ENCODE measurements at regions of chr7 and their contacts with region 1.

Region 1: DNA sequence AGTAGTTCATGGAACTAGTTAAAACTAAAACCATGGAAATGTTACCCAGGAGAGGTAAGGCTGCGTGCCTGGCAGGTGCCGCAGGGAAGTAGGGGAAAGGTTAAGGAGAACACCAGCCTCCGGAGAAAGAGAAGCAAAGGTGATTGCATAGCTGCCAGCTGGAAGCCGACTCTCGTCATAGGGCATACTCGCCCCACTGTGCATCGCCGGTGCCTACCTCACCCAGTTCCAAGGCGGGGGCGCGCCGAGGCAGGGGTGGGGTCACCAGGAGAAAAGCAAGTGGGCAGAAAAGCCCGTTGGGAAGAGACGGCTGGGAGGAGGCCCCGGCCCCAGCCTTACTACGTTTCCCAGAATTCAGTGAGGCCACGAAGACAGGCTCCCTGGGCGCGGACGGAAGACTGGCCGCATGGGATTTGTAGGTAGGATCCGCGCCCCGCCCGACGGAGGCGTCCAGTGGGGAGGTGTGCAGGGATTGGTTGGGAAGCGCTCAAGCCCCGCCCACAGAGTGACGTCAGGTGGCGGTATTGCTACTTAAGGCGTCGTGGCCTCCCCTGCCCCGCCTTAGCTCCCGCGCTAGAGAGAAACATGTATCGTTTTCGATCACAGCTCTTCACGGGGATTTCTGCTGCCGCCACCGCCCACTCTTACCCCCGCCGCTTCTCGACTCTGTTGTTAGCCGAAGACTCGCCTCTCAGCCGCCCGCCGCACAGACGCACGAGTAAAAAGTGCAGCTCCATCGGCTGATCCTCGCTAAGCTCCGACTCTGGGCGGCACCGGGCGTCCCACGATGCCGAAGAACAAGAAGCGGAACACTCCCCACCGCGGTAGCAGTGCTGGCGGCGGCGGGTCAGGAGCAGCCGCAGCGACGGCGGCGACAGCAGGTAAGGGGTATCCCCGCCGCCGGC is at the start of gene IFRD1:
- DNase-seq: peak; percentile 95
- ATAC-seq: peak; percentile 86
- H3K4me3 ChIP-seq: peak within 1 kb of the TSS; percentile 94 to 97
- H3K27ac ChIP-seq: peak within 1 kb of the TSS; percentile 77
- H3K4me1 ChIP-seq: peaks cover 18 to 32% of the 10 kb centered on the region in 2 experiments
- H3K27me3 ChIP-seq: no peaks in the 10 kb centered on the region
- CTCF ChIP-seq: no peak
- POLR2A ChIP-seq: peak; percentile 98
- RAD21 ChIP-seq: no peak
- total RNA-seq, gene IFRD1: 43.6 TPM

Region 2: DNA sequence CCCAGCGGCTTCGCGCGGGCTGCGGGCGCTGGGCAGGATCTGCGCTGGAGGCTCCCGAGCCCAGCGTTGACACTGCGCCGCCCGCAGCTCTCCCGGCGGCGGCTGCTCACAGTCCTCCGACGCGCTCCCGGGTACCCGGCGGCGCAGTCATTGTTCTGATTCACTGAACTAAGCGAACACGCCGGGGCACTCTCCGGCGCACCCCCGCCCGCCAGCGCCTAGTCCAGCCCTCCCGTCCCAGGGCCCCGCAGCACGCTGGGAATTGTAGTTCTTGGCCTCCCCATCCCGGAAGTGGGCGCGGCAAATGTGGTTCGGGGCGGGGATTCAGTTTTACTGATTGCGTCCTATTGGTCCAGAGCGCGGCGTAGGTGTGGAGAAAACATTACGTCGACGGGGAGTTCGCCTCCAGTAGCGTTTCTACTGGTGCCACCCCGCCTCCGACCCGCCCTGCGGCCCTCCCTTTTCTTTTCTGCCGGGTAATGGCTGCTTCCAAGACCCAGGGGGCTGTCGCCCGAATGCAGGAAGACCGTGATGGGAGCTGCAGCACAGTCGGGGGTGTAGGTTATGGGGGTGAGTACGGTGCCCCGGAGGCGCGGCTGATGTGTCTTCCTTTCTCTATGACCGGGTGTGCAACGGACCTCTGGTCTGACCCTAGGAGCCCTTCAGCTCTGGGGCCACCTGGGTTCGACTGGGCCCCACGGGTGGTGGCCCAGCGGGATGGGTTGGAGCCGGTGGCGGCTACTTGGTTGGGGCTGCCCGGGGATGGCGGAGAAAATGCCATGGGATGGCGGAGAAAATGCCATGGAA is 243.7 kb before region 1 on chr7 and contains the starts of genes DOCK4 and ZNF277:
- CTCF ChIA-PET with region 1: no interaction called
- POLR2A ChIA-PET with region 1: interaction called, 5 read pairs
- RAD21 ChIA-PET with region 1: no interaction called
- intact Hi-C with region 1: loop called (anchors 2 kb)
- DNase-seq: peak; percentile 96
- ATAC-seq: peak; percentile 89
- H3K4me3 ChIP-seq: peak within 1 kb of the TSS; percentile 73 to 76
- H3K27ac ChIP-seq: peak within 1 kb of the TSS; percentile 11; the same call in 1 of the 2 replicates
- H3K4me1 ChIP-seq: peaks cover 2 to 17% of the 10 kb centered on the region in 2 experiments; a peak in 3 of 4 replicates
- H3K27me3 ChIP-seq: peaks cover 21% of the 10 kb centered on the region
- CTCF ChIP-seq: no peak
- POLR2A ChIP-seq: no peak
- RAD21 ChIP-seq: no peak
- total RNA-seq, gene DOCK4: 2.2 TPM
- total RNA-seq, gene ZNF277: 21.3 TPM

Region 3: DNA sequence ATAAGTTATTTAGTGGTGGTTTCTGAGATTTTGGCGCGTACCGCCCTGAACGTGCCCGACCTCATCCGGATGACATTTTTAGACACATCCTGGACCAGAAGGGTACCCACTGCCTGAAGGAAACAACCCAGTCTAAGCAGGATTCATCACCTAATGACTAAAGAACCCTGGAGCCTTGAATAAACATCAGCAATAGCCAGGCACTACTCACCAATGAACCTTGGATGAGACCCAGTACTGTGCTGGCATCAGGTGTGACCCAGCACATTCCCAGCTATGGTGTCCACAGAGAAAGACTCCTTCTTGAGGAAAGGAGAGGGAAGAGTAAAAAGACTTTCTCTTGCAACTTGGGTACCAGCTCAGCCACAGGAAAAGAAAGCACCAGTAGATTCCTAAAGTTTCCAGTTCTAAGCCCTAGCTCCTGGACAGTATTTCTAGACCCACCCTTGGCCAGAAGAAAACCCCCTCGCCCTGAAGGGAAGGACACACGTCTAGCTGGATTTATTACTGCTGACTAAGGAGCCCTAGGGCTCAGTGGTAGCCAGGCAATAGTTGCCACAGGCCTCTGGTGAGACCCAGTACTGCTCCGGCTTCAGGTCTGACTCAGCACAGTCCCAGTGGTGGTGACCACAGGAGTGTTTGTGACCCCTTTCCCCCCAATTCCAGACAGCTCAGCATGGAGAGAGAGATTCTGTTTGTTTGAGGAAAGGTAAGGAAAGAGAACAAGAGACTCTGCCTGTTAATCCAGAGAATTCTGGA is 211.1 kb before region 1 on chr7:
- CTCF ChIA-PET with region 1: no interaction called
- POLR2A ChIA-PET with region 1: no interaction called
- RAD21 ChIA-PET with region 1: no interaction called
- intact Hi-C with region 1: no loop called
- DNase-seq: no peak
- ATAC-seq: peak; percentile 66; the same call in 1 of the 2 replicates
- H3K4me3 ChIP-seq: no peak overlapping the region
- H3K27ac ChIP-seq: no peak overlapping the region
- H3K4me1 ChIP-seq: peaks cover 0 to 6% of the 10 kb centered on the region in 2 experiments; a peak in 1 of 4 replicates
- H3K27me3 ChIP-seq: no peaks in the 10 kb centered on the region
- CTCF ChIP-seq: no peak
- POLR2A ChIP-seq: no peak
- RAD21 ChIP-seq: no peak

Region 4: DNA sequence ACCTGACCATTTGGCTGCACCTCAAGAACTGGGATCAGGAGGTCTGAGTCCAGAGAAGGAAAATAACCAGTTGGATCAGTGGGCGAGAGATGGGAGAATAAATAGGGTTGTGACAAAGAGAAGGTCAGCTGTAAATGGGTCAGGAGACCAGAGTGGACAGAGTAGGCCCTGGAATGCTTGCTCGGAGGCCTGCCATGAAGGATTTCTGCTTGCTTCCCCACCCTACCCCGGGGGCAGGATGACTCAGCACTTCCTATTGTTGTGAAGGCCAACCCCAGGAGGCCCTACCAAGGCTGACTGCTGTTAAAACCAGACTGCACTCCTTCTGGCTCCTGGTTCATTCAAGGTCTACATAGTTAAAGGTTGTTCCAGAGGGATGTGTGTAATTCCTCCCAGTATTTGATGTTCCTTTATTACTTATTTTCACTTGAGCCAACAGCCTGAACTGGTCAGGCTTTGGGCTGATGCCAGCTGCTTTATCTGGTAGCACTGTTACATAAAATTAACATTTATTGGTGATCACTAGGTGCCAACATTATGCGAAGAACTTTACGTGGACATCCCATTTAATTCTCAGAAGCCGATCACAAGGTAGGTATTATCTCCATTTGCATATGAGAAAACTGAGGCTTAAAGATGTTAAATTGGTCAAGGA is 27.2 kb before region 1 on chr7:
- CTCF ChIA-PET with region 1: no interaction called
- POLR2A ChIA-PET with region 1: interaction called, 27 read pairs
- RAD21 ChIA-PET with region 1: interaction called in 1 of 2 experiments, 4 read pairs
- intact Hi-C with region 1: no loop called
- DNase-seq: peak; percentile 63
- ATAC-seq: peak; percentile 92
- H3K4me3 ChIP-seq: no peak overlapping the region; a peak in 1 of 4 replicates
- H3K27ac ChIP-seq: peak overlapping the region; percentile 23
- H3K4me1 ChIP-seq: peaks cover 22 to 25% of the 10 kb centered on the region in 2 experiments
- H3K27me3 ChIP-seq: no peaks in the 10 kb centered on the region
- CTCF ChIP-seq: no peak
- POLR2A ChIP-seq: no peak
- RAD21 ChIP-seq: 0 out of 2 replicates have a peak, but pooled peaks have one; percentile 3

Region 5: DNA sequence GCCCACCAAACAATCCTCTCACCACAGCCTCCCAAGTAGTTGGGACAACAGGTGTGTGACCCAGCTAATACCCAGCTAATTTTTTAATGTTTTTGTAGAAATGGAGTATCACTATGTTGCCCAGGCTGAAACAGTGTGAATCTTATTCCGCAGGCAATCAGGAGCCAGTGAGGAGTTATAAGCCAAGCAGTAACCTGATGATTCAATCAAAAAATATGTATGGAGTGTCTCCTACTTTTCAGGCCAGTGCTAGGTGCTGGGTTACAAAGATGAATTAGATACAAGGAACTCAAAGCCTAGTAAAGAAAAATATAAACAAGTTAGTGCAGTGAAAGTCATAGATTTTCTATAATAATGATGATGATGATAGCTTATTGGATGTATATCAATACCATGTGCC is 13.1 kb before region 1 on chr7:
- CTCF ChIA-PET with region 1: no interaction called
- POLR2A ChIA-PET with region 1: interaction called, 20 read pairs
- RAD21 ChIA-PET with region 1: no interaction called
- intact Hi-C with region 1: no loop called
- DNase-seq: no peak
- ATAC-seq: no peak
- H3K4me3 ChIP-seq: no peak overlapping the region
- H3K27ac ChIP-seq: no peak overlapping the region
- H3K4me1 ChIP-seq: peaks cover 0 to 16% of the 10 kb centered on the region in 2 experiments; a peak in 1 of 4 replicates
- H3K27me3 ChIP-seq: no peaks in the 10 kb centered on the region
- CTCF ChIP-seq: no peak
- POLR2A ChIP-seq: no peak
- RAD21 ChIP-seq: no peak

Region 6: DNA sequence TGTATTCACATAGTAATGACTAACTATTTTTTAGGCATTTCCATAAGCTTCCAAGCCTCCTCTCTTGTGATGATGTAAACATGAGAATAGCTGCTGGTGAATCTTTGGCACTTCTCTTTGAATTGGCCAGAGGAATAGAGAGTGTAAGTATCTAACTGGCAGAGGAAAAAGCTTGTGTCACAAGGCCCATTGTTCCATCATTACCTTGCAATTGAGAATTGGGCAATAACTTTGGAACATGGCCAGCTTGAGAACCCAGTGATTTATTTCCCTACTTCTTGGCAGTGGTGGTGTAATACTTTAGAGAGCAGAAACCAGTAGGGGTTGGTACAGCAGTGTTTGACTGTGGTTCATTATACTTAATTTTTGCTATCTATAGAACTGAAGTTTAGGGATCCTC is 12.1 kb after region 1 on chr7:
- CTCF ChIA-PET with region 1: no interaction called
- POLR2A ChIA-PET with region 1: interaction called, 21 read pairs
- RAD21 ChIA-PET with region 1: no interaction called
- intact Hi-C with region 1: no loop called
- DNase-seq: no peak
- ATAC-seq: no peak
- H3K4me3 ChIP-seq: no peak overlapping the region
- H3K27ac ChIP-seq: no peak overlapping the region
- H3K4me1 ChIP-seq: no peaks in the 10 kb centered on the region
- H3K27me3 ChIP-seq: no peaks in the 10 kb centered on the region
- CTCF ChIP-seq: no peak
- POLR2A ChIP-seq: no peak
- RAD21 ChIP-seq: no peak

Region 7: DNA sequence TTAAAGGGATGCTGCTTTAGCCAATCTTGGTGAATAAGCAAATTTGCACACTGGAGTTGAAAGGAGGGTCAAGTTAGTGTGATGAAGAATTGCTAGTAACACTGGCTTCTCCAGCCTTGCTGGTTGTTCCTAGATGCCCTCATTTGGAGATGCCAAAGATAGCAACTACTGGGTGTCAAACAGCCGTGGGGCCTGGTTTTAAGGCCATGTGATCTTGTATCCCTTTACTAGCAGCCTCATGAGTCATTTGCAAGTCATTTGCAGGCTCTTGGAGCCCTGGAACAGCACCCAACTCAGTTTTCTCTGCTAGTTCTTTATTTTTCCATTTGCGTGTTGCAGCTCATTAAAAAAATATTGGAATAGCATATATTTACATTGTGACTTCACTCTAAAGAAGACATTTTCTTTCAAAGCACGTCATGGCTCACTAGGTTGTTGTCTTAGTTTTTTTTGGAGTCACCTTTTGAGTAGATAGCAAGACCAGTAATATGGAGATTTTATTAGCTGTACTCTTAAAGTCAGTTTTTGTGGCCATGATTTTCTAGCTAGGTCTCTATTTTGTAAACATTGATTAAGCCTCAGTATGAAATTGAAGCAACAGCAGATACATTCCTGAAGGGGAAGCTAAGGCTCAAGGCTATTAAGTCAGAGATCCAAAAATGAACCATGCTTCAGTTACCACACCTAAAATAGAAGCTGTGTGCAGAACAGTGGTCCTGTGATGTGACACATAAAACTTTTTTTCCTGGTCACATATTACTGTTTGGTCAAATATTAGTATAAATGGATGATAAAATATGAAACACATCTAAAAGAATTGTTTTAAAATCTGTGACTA is 31.9 kb after region 1 on chr7:
- CTCF ChIA-PET with region 1: no interaction called
- POLR2A ChIA-PET with region 1: interaction called, 18 read pairs
- RAD21 ChIA-PET with region 1: no interaction called
- intact Hi-C with region 1: no loop called
- DNase-seq: peak; percentile 50
- ATAC-seq: peak; percentile 62
- H3K4me3 ChIP-seq: no peak overlapping the region
- H3K27ac ChIP-seq: no peak overlapping the region
- H3K4me1 ChIP-seq: peaks cover 29 to 41% of the 10 kb centered on the region in 2 experiments
- H3K27me3 ChIP-seq: no peaks in the 10 kb centered on the region
- CTCF ChIP-seq: no peak
- POLR2A ChIP-seq: no peak
- RAD21 ChIP-seq: no peak

Measured in HCT116 (cell line).